Transverse colon (tissue), 4 donors: ENCODE measurements at regions of chr1 and their contacts with region 1.

Region 1: GRCh38 chr1:109773146-109773899 is 9.6 kb upstream of the EPS8L3 start:
- DNase-seq: peak; percentile 87
- H3K4me3 ChIP-seq: no peak overlapping the region
- H3K27ac ChIP-seq: no peak overlapping the region
- H3K4me1 ChIP-seq: peaks cover 0 to 7% (median 4%) of the 10 kb centered on the region in 4 donors
- H3K27me3 ChIP-seq: no peaks in the 10 kb centered on the region
- CTCF ChIP-seq: peak; percentile 79 to 93 (median 84)
- EP300 ChIP-seq: no peak
- POLR2A ChIP-seq: no peak

Region 2: GRCh38 chr1:109548321-109549267 is 224.7 kb before region 1 on chr1 and contains the start of gene GNAI3:
- in situ Hi-C with region 1: loop called (anchors 5 to 10 kb)
- intact Hi-C with region 1: no loop called
- DNase-seq: peak; percentile 99
- H3K4me3 ChIP-seq: peak within 1 kb of the TSS; percentile 65 to 94 (median 85)
- H3K27ac ChIP-seq: peak within 1 kb of the TSS; percentile 95 to 98 (median 97)
- H3K4me1 ChIP-seq: peaks cover 9 to 55% (median 30%) of the 10 kb centered on the region in 4 donors
- H3K27me3 ChIP-seq: no peaks in the 10 kb centered on the region
- CTCF ChIP-seq: peak in 1 of 5 experiments; percentile 12
- EP300 ChIP-seq: no peak
- POLR2A ChIP-seq: peak; percentile 100
- total RNA-seq, gene GNAI3: 2.2 to 7.5 (median 5.1) TPM

Region 3: GRCh38 chr1:109650609-109651008 is 122.7 kb before region 1 on chr1:
- in situ Hi-C with region 1: loop called in 2 of 4 experiments (anchors 5 to 10 kb)
- intact Hi-C with region 1: no loop called
- DNase-seq: no peak
- H3K4me3 ChIP-seq: no peak overlapping the region
- H3K27ac ChIP-seq: no peak overlapping the region
- H3K4me1 ChIP-seq: peaks cover 7 to 9% (median 8%) of the 10 kb centered on the region in 4 donors
- H3K27me3 ChIP-seq: no peaks in the 10 kb centered on the region
- CTCF ChIP-seq: no peak
- EP300 ChIP-seq: no peak
- POLR2A ChIP-seq: no peak

Region 4: GRCh38 chr1:109751531-109752260 is 21.6 kb before region 1 on chr1:
- in situ Hi-C with region 1: no loop called
- intact Hi-C with region 1: loop called (anchors 1 kb)
- DNase-seq: no peak
- H3K4me3 ChIP-seq: no peak overlapping the region
- H3K27ac ChIP-seq: no peak overlapping the region
- H3K4me1 ChIP-seq: no peaks in the 10 kb centered on the region
- H3K27me3 ChIP-seq: no peaks in the 10 kb centered on the region
- CTCF ChIP-seq: no peak
- EP300 ChIP-seq: no peak
- POLR2A ChIP-seq: no peak

Region 5: GRCh38 chr1:109979489-109980091 is 206.3 kb after region 1 on chr1:
- in situ Hi-C with region 1: loop called in 3 of 4 experiments (anchors 5 kb)
- intact Hi-C with region 1: loop called (anchors 1 kb)
- DNase-seq: no peak
- H3K4me3 ChIP-seq: no peak overlapping the region
- H3K27ac ChIP-seq: peak overlapping the region; percentile 32 to 46 (median 41)
- H3K4me1 ChIP-seq: peaks cover 10 to 25% (median 18%) of the 10 kb centered on the region in 4 donors
- H3K27me3 ChIP-seq: no peaks in the 10 kb centered on the region
- CTCF ChIP-seq: no peak
- EP300 ChIP-seq: no peak
- POLR2A ChIP-seq: no peak

Region 6: GRCh38 chr1:110011527-110012041 is 238.3 kb after region 1 on chr1:
- in situ Hi-C with region 1: no loop called
- intact Hi-C with region 1: no loop called
- DNase-seq: peak; percentile 50
- H3K4me3 ChIP-seq: no peak overlapping the region
- H3K27ac ChIP-seq: peak overlapping the region; percentile 18 to 48 (median 22)
- H3K4me1 ChIP-seq: peaks cover 0 to 18% (median 7%) of the 10 kb centered on the region in 4 donors
- H3K27me3 ChIP-seq: no peaks in the 10 kb centered on the region
- CTCF ChIP-seq: peak; percentile 46 to 69 (median 57)
- EP300 ChIP-seq: no peak
- POLR2A ChIP-seq: no peak